PC-3 (cell line): ENCODE measurements at regions of chr18 and their contacts with region 1.

Region 1: DNA sequence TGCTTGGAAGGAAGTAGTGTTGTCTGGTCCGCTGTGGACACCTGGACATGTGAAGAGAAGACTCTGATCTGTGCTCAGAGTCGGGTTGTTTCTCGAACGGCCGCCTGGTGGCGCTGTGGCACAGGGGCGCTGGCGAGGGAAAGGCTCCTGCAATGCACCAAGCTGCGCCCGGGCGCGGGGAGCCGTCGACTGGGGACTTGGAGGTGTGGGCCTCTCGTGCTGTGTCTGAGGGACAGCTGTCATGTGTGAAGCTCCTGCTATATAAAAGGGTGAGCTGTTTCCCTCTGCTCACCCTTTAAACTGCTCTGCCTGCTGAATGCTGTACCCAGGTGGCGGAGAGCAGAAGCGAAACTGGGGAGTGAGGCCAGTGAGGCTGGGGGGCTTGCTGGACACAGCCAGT is 44.0 kb downstream of the GNAL start:
- DNase-seq: peak; percentile 85
- ATAC-seq: peak; percentile 95
- H3K4me3 ChIP-seq: peak overlapping the region; percentile 58
- H3K27ac ChIP-seq: no peak overlapping the region
- H3K4me1 ChIP-seq: peaks cover 9% of the 10 kb centered on the region; the same call in 1 of the 2 replicates
- H3K27me3 ChIP-seq: peaks cover 75% of the 10 kb centered on the region
- CTCF ChIP-seq: peak; percentile 96

Region 2: GRCh38 chr18:11654736-11655605 is 78.1 kb before region 1 on chr18:
- CTCF ChIA-PET with region 1: interaction called, 5 read pairs
- POLR2A ChIA-PET with region 1: no interaction called
- intact Hi-C with region 1: loop called (anchors 2 kb)
- DNase-seq: peak; percentile 62
- ATAC-seq: peak; percentile 94
- H3K4me3 ChIP-seq: peak overlapping the region; percentile 6; the same call in 1 of the 2 replicates
- H3K27ac ChIP-seq: no peak overlapping the region
- H3K4me1 ChIP-seq: no peaks in the 10 kb centered on the region
- H3K27me3 ChIP-seq: peaks cover 83% of the 10 kb centered on the region
- CTCF ChIP-seq: peak; percentile 97

Region 3: DNA sequence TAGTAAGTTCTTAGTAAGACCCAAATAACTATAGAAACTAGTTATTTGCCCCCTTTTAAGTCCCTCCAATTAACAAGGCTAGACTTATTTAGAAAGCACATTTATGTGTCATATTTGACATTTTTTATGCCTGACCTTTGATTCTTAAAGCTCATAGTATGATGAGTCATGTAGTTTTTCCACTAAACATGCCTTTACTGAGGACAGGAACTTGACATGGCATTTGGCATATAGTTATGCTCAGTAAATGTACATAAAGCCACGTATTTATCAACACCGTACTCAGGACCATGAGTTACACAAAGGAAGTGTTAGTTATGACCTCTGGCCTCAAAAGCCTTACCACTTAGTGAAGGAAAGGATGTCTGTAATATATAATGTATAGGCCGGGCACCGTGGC is 34.9 kb after region 1 on chr18:
- CTCF ChIA-PET with region 1: no interaction called
- POLR2A ChIA-PET with region 1: no interaction called
- intact Hi-C with region 1: no loop called
- DNase-seq: peak; percentile 91
- ATAC-seq: peak; percentile 98
- H3K4me3 ChIP-seq: no peak overlapping the region
- H3K27ac ChIP-seq: no peak overlapping the region
- H3K4me1 ChIP-seq: peaks cover 13% of the 10 kb centered on the region
- H3K27me3 ChIP-seq: no peaks in the 10 kb centered on the region
- CTCF ChIP-seq: no peak

Region 4: DNA sequence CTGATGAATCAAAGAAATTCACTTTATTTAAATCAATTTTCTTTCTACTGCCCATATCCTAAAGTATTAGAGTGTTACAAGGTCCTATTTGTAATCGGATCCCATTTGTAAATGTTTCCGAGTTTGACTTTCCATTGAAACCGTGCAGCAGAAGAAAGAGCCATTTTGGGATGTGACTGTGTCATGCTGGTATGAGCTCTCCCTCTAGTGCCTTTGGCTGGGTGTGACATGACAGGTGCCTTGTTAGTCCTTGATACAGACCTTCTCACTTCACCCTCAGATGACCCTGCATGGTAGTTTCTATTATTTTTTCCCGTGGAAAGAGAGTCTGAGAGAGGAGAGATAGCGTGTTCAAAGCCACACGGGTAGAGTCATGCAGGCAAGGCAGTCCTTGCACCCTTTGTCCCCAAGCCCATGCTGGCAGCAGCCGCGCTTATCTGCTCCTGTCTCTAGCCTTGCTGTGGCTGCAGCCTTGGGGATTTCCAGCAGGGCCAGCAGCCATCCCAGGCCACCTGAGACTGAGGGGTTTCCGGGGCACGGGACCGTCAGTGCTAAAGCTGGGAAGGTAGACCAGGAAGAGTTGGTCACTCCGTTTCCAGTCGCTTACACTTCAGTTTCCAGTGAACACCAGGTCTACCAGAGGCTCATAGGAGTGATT is 139.6 kb after region 1 on chr18:
- CTCF ChIA-PET with region 1: interaction called, 6 read pairs
- POLR2A ChIA-PET with region 1: no interaction called
- intact Hi-C with region 1: loop called (anchors 1 kb)
- DNase-seq: peak; percentile 74
- ATAC-seq: peak; percentile 98
- H3K4me3 ChIP-seq: peak overlapping the region; percentile 33; the same call in 1 of the 2 replicates
- H3K27ac ChIP-seq: no peak overlapping the region
- H3K4me1 ChIP-seq: peaks cover 11% of the 10 kb centered on the region
- H3K27me3 ChIP-seq: no peaks in the 10 kb centered on the region
- CTCF ChIP-seq: peak; percentile 89

Region 5: GRCh38 chr18:11995445-11996189 is 262.6 kb after region 1 on chr18:
- CTCF ChIA-PET with region 1: no interaction called
- POLR2A ChIA-PET with region 1: no interaction called
- intact Hi-C with region 1: loop called (anchors 2 kb)
- DNase-seq: peak; percentile 81
- ATAC-seq: peak; percentile 84
- H3K4me3 ChIP-seq: peak overlapping the region; percentile 37; the same call in 1 of the 2 replicates
- H3K27ac ChIP-seq: peak overlapping the region; percentile 89
- H3K4me1 ChIP-seq: peaks cover 31% of the 10 kb centered on the region
- H3K27me3 ChIP-seq: no peaks in the 10 kb centered on the region
- CTCF ChIP-seq: peak; percentile 96